Caco-2 (cell line): ENCODE measurements at regions of chr22 and their contacts with region 1.

Region 1: GRCh38 chr22:37043828-37044538 is 7.6 kb upstream of the KCTD17 start:
- DNase-seq: peak; percentile 88
- H3K4me3 ChIP-seq: no peak overlapping the region
- H3K4me3 Mint-ChIP-seq: peak overlapping the region; percentile 39
- H3K27ac Mint-ChIP-seq: peak overlapping the region; percentile 59
- H3K4me1 ChIP-seq: peaks cover 27% of the 10 kb centered on the region
- H3K4me1 Mint-ChIP-seq: peaks cover 20% of the 10 kb centered on the region
- H3K27me3 ChIP-seq: no peaks in the 10 kb centered on the region
- H3K27me3 Mint-ChIP-seq: no peaks in the 10 kb centered on the region
- CTCF ChIP-seq: peak; percentile 86 to 87

Region 2: DNA sequence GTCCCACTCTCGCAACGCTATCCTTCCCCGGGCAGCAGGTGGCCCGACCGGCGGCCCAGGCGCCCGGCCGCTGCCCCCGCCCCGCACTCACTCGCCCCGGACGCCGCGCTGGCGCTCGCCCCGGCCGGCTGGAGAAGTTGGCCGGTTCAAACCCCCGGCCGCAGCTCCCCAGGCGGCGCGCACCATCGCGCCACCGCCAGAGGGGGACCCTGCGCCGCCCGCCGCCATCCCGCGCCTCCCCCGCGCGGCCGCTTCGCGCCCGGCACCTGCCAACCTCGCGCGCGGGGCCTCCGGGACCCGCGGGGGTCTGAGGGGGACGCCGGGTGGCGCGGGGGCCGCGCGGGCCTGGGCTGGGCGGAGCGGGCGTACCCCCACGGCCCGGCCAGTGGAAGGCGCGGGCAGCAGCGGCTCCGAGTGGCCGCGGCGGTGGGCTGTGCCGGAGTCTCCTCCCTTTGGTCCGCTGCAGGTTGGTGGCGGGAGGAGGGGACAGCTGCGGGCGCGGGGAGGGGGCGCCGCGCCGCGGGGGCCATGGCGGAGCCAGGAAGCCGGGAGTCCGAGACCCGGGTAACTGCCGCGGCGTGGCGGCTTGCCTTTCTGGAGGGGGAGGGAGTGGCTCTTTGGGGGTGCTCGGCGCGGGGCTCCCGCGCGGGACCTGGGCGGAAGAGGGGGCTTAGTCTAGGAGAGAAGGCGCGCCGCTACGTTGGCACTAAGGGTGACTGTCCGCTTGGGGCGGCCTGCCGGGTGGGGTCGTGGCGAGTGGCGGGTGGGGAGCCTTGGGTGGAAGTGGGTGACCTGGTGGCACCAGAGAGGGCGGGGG is 24.5 kb before region 1 on chr22 and contains the starts of genes MPST and TST:
- CTCF ChIA-PET with region 1: interaction called, 15 read pairs
- POLR2A ChIA-PET with region 1: interaction called, 17 read pairs
- intact Hi-C with region 1: no loop called
- DNase-seq: peak; percentile 79 to 85
- H3K4me3 ChIP-seq: peak within 1 kb of the TSS; percentile 70
- H3K4me3 Mint-ChIP-seq: peak within 1 kb of the TSS; percentile 96
- H3K27ac Mint-ChIP-seq: peak within 1 kb of the TSS; percentile 91
- H3K4me1 ChIP-seq: peaks cover 16% of the 10 kb centered on the region; the same call in 1 of the 2 replicates
- H3K4me1 Mint-ChIP-seq: no peaks in the 10 kb centered on the region
- H3K27me3 ChIP-seq: no peaks in the 10 kb centered on the region; the same call in 1 of the 2 replicates
- H3K27me3 Mint-ChIP-seq: no peaks in the 10 kb centered on the region
- CTCF ChIP-seq: peak in 1 of 2 experiments; percentile 6
- total RNA-seq, gene MPST: 81.8 and 83.7 TPM in 2 replicates
- total RNA-seq, gene TST: 37.0 and 44.9 TPM in 2 replicates

Region 3: DNA sequence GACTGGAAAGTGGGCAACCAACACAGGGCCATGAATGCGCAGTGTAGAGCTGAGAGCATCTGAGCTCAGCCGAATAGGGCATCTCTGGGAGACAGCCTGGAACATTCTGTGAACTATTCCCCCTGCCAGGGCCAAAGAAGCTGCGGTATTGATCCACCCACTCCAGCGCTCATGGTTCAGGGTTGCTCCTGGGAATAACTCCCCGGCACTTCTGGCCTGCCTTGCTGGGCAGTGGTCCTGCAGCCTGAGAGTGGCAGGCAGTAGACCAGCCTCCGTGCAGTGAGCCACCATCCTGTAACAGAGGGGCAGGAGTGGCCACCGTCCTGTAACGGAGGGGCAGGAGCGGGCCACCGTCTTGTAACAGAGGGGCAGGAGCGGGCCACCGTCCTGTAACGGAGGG is 53.4 kb after region 1 on chr22:
- CTCF ChIA-PET with region 1: no interaction called
- POLR2A ChIA-PET with region 1: no interaction called
- intact Hi-C with region 1: no loop called
- DNase-seq: no peak
- H3K4me3 ChIP-seq: no peak overlapping the region
- H3K4me3 Mint-ChIP-seq: no peak overlapping the region
- H3K27ac Mint-ChIP-seq: no peak overlapping the region
- H3K4me1 ChIP-seq: peaks cover 11% of the 10 kb centered on the region
- H3K4me1 Mint-ChIP-seq: peaks cover 19% of the 10 kb centered on the region
- H3K27me3 ChIP-seq: no peaks in the 10 kb centered on the region
- H3K27me3 Mint-ChIP-seq: peaks cover 4% of the 10 kb centered on the region
- CTCF ChIP-seq: no peak

Region 4: DNA sequence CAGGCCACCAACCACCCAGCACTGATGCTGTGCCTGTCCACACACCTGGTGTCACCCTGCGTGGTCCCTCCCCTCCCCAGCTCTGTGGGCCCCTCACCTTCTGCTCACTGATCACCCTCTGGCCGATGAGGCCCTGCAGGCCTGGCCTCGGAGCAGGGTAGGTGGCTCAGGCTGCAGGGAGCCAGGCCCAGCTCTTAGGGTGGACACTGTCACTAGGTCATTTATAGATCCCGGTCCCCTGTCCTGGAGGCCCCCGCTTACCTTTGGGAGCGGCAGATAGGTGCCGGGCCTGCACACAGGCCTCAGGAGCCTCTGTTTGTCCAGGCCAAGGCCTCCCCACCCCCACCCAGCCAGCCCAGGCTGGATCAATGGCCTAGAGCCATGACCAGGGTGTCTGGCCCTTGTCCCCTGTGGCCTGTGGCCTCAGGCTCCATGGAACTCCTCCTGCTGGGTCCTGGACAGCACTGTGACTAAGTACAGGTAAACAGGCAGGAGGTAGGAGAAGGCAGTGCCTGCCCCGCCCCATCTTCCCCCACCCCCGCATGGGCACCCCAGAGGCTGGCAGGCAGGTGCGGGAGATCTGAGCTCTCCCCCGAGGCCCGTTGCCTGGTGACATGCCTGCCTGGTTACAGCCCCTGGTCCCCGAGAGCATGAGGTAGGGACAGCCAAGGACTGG is 65.4 kb after region 1 on chr22 and contains the start of gene TMPRSS6:
- CTCF ChIA-PET with region 1: no interaction called
- POLR2A ChIA-PET with region 1: interaction called, 10 read pairs
- intact Hi-C with region 1: no loop called
- DNase-seq: peak; percentile 44 to 67
- H3K4me3 ChIP-seq: no peak within 1 kb of the TSS
- H3K4me3 Mint-ChIP-seq: no peak within 1 kb of the TSS
- H3K27ac Mint-ChIP-seq: peak within 1 kb of the TSS; percentile 14
- H3K4me1 ChIP-seq: peaks cover 25% of the 10 kb centered on the region
- H3K4me1 Mint-ChIP-seq: peaks cover 15% of the 10 kb centered on the region
- H3K27me3 ChIP-seq: no peaks in the 10 kb centered on the region
- H3K27me3 Mint-ChIP-seq: no peaks in the 10 kb centered on the region
- CTCF ChIP-seq: no peak
- total RNA-seq, gene TMPRSS6: 1.5 and 1.6 TPM in 2 replicates